GM18951 (cell line): ENCODE measurements at regions of chr2 and their contacts with region 1.

Region 1: DNA sequence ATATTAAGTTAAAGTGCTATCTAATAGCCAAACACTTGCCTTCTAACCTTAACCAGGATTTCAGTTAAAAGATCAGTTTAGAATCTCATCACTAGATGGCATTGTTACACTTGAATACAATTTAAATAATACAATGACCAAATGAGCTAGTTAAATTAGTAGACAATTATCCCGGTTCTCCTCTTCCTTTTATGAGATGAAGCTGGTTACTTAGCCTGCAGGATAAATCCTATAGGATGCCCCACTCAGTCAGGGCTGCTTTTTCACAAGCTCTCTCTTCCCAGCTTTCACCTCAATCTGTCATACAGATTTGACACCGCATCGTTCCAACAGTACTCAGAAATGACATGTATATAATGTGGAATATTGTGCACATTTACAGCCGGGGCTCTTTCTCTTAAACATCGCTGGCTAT is 678.8 kb downstream of the KCNJ3 start:
- POLR2A ChIP-seq: no peak

Region 2: DNA sequence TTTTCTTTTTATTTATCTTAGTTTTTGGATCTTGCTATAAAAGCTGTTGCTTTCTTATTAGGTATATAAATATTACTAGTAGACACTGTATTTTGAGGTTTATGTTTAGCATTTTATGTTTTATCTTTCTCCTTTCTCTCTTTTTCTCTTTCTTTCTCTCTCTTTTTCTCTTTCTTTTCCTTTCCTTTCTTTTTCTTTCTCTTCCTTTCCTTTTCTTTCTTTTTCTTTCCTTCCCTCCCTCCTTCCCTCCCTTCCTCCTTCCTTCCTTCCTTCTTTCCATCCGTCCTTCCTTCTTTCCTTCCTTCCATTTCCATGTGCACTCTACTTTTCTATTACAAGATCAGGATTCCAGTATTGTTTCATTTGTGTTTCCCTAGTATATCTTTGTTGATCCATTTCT is 136.0 kb after region 1 on chr2:
- in situ Hi-C with region 1: no loop called
- POLR2A ChIP-seq: no peak

Region 3: GRCh38 chr2:155842103-155842502 is 464.8 kb after region 1 on chr2:
- in situ Hi-C with region 1: loop called (anchors 25 kb)
- POLR2A ChIP-seq: no peak

Region 4: GRCh38 chr2:156319811-156320485 is 942.7 kb after region 1 on chr2:
- in situ Hi-C with region 1: loop called (anchors 25 kb)
- POLR2A ChIP-seq: no peak